Naive thymus-derived CD8-positive, alpha-beta T cell (primary cell): ENCODE measurements at regions of chr6 and their contacts with region 1.

Region 1: GRCh38 chr6:159789377-159790148 is at the start of gene TCP1:
- DNase-seq: peak; percentile 91 to 99 (median 98)
- ATAC-seq: peak; percentile 77 to 81
- H3K4me3 Mint-ChIP-seq: peak within 1 kb of the TSS; percentile 97 to 100 (median 99)
- H3K27ac Mint-ChIP-seq: peak within 1 kb of the TSS; percentile 84 to 99 (median 98)
- H3K4me1 Mint-ChIP-seq: peaks cover 27 to 67% (median 66%) of the 10 kb centered on the region in 4 donors
- H3K27me3 Mint-ChIP-seq: no peaks in the 10 kb centered on the region
- polyA plus RNA-seq, gene TCP1: 68.8 to 97.6 (median 72.4) TPM

Region 2: GRCh38 chr6:159693128-159693893 is 96.3 kb before region 1 on chr6 and contains the start of gene SOD2:
- POLR2A ChIA-PET with region 1: interaction called, 42 read pairs
- DNase-seq: peak; percentile 70 to 95 (median 84)
- ATAC-seq: peak; percentile 74 to 77
- H3K4me3 Mint-ChIP-seq: peak within 1 kb of the TSS; percentile 88 to 97 (median 94)
- H3K27ac Mint-ChIP-seq: peak within 1 kb of the TSS; percentile 35 to 98 (median 96)
- H3K4me1 Mint-ChIP-seq: peaks cover 29 to 45% (median 45%) of the 10 kb centered on the region in 4 donors
- H3K27me3 Mint-ChIP-seq: no peaks in the 10 kb centered on the region
- polyA plus RNA-seq, gene SOD2: 80.5 to 92.0 (median 90.0) TPM

Region 3: DNA sequence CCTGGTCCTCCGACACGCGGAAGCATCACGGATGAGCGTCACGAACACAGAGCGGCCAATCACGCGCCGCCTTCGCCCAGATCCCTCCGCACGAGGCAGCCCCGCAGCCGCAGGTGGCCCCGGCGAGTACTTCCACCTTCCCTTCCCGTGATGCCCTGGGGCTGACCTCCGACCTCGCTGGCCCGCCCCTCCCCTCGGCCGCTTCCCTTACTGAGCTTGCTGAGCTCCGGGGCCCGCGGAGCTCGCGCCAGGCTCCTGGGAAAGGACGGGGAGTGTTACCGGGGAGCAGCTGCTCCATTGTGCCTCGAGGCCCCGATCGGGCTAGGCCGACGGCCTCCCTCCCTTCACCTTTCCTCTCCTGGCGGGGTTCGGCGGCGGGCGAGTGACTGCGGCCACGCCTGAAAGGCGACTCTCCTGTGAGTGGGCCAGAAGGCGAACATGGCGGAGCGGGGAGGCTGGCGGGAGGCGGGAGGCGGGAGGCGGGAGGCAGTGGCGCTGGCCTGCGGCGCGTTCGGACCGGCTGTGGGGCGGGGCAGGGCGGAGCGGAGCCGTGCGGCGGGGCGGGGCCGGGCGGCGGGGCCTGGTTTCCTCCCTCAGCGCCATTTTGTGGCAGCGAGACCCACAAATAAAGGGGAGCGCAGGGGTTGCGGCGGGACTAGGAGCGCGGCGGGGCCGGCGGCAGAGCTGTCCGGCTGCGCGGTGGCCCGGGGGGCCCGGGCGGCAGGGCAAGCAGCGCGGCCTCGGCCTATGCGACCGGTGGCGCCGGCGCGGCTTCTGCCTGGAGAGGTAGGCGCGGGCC is 62.4 kb before region 1 on chr6 and contains the start of gene WTAP:
- POLR2A ChIA-PET with region 1: interaction called, 86 read pairs
- DNase-seq: peak; percentile 93 to 99 (median 97)
- ATAC-seq: peak; percentile 80 to 82
- H3K4me3 Mint-ChIP-seq: peak within 1 kb of the TSS; percentile 88 to 96 (median 96)
- H3K27ac Mint-ChIP-seq: peak within 1 kb of the TSS; percentile 97 to 99 (median 99)
- H3K4me1 Mint-ChIP-seq: peaks cover 21 to 69% (median 57%) of the 10 kb centered on the region in 4 donors
- H3K27me3 Mint-ChIP-seq: peaks cover 0 to 2% (median 0%) of the 10 kb centered on the region in 5 donors
- polyA plus RNA-seq, gene WTAP: 104 to 128 (median 122) TPM

Region 4: DNA sequence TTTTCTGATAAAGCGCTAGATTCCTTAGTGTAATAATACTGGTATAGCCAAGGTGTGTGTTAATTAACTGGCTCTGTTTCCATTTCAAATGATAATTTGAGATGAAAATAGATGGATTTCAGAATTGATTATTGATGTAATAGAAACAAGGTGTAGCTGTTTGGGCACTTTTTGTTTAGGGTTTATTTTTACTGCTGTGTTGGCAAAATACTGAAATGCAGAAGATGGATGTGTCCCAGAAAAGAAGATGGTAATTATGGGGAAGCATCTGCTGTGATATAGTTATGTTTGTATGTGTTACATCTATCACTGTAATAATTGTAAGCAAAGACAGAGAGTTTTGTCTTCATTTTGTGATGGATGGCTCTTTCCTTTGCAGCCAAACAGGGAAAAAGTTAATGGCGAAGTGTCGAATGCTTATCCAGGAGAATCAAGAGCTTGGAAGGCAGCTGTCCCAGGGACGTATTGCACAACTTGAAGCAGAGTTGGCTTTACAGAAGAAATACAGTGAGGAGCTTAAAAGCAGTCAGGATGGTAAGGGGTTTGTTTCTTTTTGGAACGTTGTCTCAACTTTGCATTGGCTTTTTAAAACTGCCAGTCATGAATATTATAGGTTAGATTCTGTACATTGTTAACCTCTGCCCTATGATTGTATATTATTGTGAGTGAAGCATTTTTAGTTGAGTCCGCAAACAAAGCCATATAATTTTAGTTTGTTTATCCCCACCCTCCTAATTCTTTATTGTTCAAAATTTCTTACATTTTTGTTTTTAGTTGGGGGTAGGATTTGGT is 36.3 kb before region 1 on chr6:
- POLR2A ChIA-PET with region 1: no interaction called
- DNase-seq: no peak
- ATAC-seq: no peak
- H3K4me3 Mint-ChIP-seq: no peak overlapping the region
- H3K27ac Mint-ChIP-seq: peak overlapping the region in 7 of 10 donors; percentile 4 to 71 (median 47)
- H3K4me1 Mint-ChIP-seq: peaks cover 0 to 9% (median 2%) of the 10 kb centered on the region in 4 donors
- H3K27me3 Mint-ChIP-seq: no peaks in the 10 kb centered on the region

Region 5: GRCh38 chr6:159819932-159820640 is 30.5 kb after region 1 on chr6:
- POLR2A ChIA-PET with region 1: interaction called, 21 read pairs
- DNase-seq: peak in 8 of 10 donors; percentile 4 to 70 (median 42)
- ATAC-seq: peak; percentile 84 to 88
- H3K4me3 Mint-ChIP-seq: peak overlapping the region; percentile 77 to 88 (median 86)
- H3K27ac Mint-ChIP-seq: peak overlapping the region; percentile 84 to 96 (median 93)
- H3K4me1 Mint-ChIP-seq: peaks cover 19 to 39% (median 25%) of the 10 kb centered on the region in 4 donors
- H3K27me3 Mint-ChIP-seq: no peaks in the 10 kb centered on the region

Region 6: DNA sequence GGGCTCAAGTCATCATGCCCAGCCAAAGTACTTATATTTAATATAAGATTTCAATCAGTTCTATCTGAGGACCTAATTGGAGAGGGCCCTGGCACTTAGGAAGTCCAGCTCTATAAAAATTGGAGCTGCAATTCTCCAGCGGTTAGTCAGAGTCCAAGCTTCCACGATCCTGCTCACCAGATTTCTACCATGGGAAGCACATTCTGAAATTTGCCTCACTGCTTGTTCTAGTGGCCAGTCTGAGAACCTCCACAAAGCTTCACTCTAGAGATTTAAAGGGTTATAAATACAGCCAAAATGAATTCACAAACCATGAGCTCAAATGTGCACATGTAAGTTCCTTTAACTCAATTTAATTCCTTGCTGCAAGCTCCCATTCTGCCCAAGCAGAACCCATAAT is 44.0 kb after region 1 on chr6:
- POLR2A ChIA-PET with region 1: interaction called, 19 read pairs
- DNase-seq: no peak
- ATAC-seq: peak; percentile 35 to 36
- H3K4me3 Mint-ChIP-seq: peak overlapping the region in 6 of 10 donors; percentile 26 to 47 (median 32)
- H3K27ac Mint-ChIP-seq: peak overlapping the region in 9 of 10 donors; percentile 13 to 87 (median 63)
- H3K4me1 Mint-ChIP-seq: peaks cover 17 to 59% (median 49%) of the 10 kb centered on the region in 4 donors
- H3K27me3 Mint-ChIP-seq: no peaks in the 10 kb centered on the region

Region 7: GRCh38 chr6:159890792-159891191 is 101.2 kb after region 1 on chr6 and contains the start of gene MAS1:
- POLR2A ChIA-PET with region 1: no interaction called
- DNase-seq: no peak
- ATAC-seq: no peak
- H3K4me3 Mint-ChIP-seq: no peak within 1 kb of the TSS
- H3K27ac Mint-ChIP-seq: no peak within 1 kb of the TSS
- H3K4me1 Mint-ChIP-seq: no peaks in the 10 kb centered on the region
- H3K27me3 Mint-ChIP-seq: peaks cover 9 to 66% (median 48%) of the 10 kb centered on the region in 5 donors
- polyA plus RNA-seq, gene MAS1: not detected